Heart left ventricle (tissue), 16 donors: ENCODE measurements at regions of chr5 and their contacts with region 1.

Region 1: DNA sequence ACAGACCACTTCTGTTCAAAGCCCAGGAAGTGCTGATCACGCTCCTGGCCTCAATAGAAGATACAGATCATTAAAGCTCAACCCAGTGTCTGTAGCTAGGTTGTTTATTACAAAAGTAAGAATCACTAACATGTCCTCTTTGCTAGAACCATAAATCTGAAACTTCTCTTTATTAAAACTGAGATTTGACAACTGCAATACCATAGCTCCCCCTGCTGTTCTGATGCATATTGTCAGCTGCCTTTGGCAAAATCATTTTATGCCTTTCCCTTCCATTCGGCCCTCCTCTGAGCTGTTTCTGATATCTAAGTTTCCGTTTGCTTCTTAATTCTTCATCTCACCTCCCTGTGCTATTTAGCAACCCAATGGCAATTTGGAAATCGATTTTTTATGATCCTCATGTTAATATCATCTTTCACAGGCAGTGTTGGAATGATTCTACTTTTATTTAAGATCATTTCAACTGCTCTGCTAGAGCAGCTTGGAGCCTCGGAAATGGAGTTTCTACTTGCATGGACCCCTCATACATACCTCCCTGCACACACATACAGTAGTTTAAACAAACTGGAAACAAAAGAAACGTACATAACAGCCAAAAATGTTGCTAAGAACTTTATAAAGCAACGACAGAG is 998.8 kb downstream of the MAT2B start:
- DNase-seq: peak in 1 of 5 donors; percentile 8
- ATAC-seq: no peak
- H3K4me3 ChIP-seq: no peak overlapping the region
- H3K27ac ChIP-seq: no peak overlapping the region
- H3K4me1 ChIP-seq: peaks cover 0 to 4% (median 0%) of the 10 kb centered on the region in 12 donors
- H3K27me3 ChIP-seq: peaks cover 0 to 10% (median 0%) of the 10 kb centered on the region in 9 donors
- CTCF ChIP-seq: peak; percentile 40 to 82 (median 68)
- POLR2A ChIP-seq: no peak

Region 2: GRCh38 chr5:163564321-163564938 is 939.8 kb before region 1 on chr5:
- intact Hi-C with region 1: loop called in 9 of 10 experiments (anchors 2 to 10 kb)
- DNase-seq: peak in 1 of 5 donors; percentile 32
- ATAC-seq: peak in 1 of 4 donors; percentile 67
- H3K4me3 ChIP-seq: no peak overlapping the region
- H3K27ac ChIP-seq: no peak overlapping the region
- H3K4me1 ChIP-seq: peaks cover 0 to 19% (median 8%) of the 10 kb centered on the region in 12 donors
- H3K27me3 ChIP-seq: peaks cover 0 to 32% (median 3%) of the 10 kb centered on the region in 9 donors
- CTCF ChIP-seq: peak; percentile 81 to 95 (median 88)
- POLR2A ChIP-seq: no peak

Region 3: GRCh38 chr5:163695830-163696578 is 808.3 kb before region 1 on chr5:
- intact Hi-C with region 1: loop called in 6 of 10 experiments (anchors 5 to 10 kb)
- DNase-seq: peak in 1 of 5 donors; percentile 6
- ATAC-seq: peak in 3 of 4 donors; percentile 41 to 79 (median 62)
- H3K4me3 ChIP-seq: no peak overlapping the region
- H3K27ac ChIP-seq: no peak overlapping the region
- H3K4me1 ChIP-seq: no peaks in the 10 kb centered on the region
- H3K27me3 ChIP-seq: no peaks in the 10 kb centered on the region
- CTCF ChIP-seq: peak in 11 of 12 donors; percentile 21 to 55 (median 39)
- POLR2A ChIP-seq: no peak

Region 4: GRCh38 chr5:164013077-164013670 is 491.1 kb before region 1 on chr5:
- intact Hi-C with region 1: loop called in 9 of 10 experiments (anchors 2 to 10 kb)
- DNase-seq: peak in 3 of 5 donors; percentile 18 to 29 (median 27)
- ATAC-seq: no peak
- H3K4me3 ChIP-seq: no peak overlapping the region
- H3K27ac ChIP-seq: no peak overlapping the region
- H3K4me1 ChIP-seq: no peaks in the 10 kb centered on the region
- H3K27me3 ChIP-seq: peaks cover 0 to 2% (median 0%) of the 10 kb centered on the region in 9 donors
- CTCF ChIP-seq: peak; percentile 47 to 72 (median 60)
- POLR2A ChIP-seq: no peak

Region 5: DNA sequence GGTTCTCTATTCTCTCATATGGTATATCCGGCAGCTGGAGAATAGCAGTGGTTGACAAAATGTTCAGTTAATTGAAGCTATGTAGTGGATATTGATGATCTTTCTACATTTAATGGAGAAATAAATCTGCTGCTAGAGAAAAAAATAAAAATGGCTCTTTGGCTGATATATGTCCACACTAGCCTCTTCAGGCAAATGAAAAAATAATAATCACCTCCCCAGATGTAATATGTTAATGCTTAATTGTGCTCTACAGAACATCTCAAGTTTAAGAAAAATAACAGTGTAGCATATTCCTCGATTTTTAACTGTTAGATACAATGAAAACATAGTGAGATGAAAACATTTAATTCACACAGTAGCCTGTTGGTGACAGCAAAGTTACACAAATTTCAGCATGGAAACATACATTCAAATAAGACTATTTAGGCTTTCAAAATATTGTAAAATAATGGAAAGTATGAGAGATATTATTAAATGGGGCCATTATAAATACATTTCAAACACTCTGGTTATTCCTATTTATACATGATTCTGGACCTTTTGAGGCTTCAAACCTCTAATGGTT is 455.8 kb before region 1 on chr5:
- intact Hi-C with region 1: loop called in 3 of 10 experiments (anchors 10 kb)
- DNase-seq: no peak
- ATAC-seq: no peak
- H3K4me3 ChIP-seq: no peak overlapping the region
- H3K27ac ChIP-seq: no peak overlapping the region
- H3K4me1 ChIP-seq: no peaks in the 10 kb centered on the region
- H3K27me3 ChIP-seq: peaks cover 0 to 6% (median 0%) of the 10 kb centered on the region in 9 donors
- CTCF ChIP-seq: peak in 8 of 12 donors; percentile 20 to 47 (median 29)
- POLR2A ChIP-seq: no peak